Psoas muscle (tissue), 8 donors: ENCODE measurements at regions of chr4 and their contacts with region 1.

Region 1: DNA sequence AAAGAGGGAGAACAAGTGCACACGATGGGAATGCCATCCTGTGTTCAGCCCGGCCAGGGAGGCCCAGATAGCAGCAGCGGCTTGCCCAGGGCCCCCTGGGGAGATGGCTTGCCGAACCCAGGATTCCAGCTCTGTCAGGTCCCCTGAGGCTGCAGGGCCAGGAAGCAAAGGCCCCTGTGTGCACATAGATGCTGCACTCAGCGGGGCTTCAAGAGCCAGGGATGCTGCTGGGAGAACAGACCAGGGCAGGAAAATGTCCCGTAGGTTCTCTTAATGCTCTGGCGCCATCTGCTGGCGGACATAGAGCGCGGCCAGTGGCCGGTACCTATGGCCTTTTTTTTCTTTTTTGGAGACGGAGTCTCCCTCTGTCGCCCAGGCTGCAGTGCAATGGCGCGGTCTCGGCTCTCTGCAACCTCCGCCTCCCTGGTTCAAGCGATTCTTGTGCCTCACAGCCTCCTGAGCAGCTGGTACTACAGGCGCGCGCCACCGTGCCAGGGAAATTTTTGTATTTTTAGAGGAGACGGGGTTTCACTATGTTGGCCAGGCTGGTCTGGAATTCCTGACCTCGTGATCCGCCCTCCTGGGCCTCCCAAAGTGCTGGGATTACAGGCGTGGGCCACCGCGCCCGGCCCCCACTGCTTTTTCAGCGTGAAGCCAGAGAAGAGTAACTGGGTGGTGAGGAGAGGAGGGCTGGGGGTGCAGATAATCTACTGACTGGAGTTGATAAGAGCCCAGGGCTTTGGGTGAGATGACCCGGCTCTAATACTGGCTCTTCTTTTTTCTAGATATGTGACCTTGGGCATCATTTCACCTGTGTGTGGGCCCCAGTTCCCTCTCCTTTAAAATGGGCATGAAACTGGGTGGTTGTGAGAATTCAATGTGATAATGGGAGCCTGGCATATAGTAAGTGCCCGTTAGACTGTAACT is 22.5 kb downstream of the MED28 start:
- DNase-seq: peak; percentile 78 to 89
- ATAC-seq: peak; percentile 81 to 88 (median 84)
- H3K4me3 ChIP-seq: no peak overlapping the region
- H3K27ac ChIP-seq: no peak overlapping the region
- H3K4me1 ChIP-seq: no peaks in the 10 kb centered on the region
- H3K27me3 ChIP-seq: no peaks in the 10 kb centered on the region
- CTCF ChIP-seq: peak; percentile 92

Region 2: GRCh38 chr4:17166954-17167353 is 470.0 kb before region 1 on chr4:
- intact Hi-C with region 1: no loop called
- DNase-seq: no peak
- ATAC-seq: no peak
- H3K4me3 ChIP-seq: no peak overlapping the region
- H3K27ac ChIP-seq: no peak overlapping the region
- H3K4me1 ChIP-seq: no peaks in the 10 kb centered on the region
- H3K27me3 ChIP-seq: no peaks in the 10 kb centered on the region
- CTCF ChIP-seq: no peak

Region 3: GRCh38 chr4:17544205-17544604 is 92.8 kb before region 1 on chr4:
- intact Hi-C with region 1: loop called (anchors 2 to 5 kb)
- DNase-seq: no peak
- ATAC-seq: no peak
- H3K4me3 ChIP-seq: no peak overlapping the region
- H3K27ac ChIP-seq: no peak overlapping the region
- H3K4me1 ChIP-seq: no peaks in the 10 kb centered on the region
- H3K27me3 ChIP-seq: no peaks in the 10 kb centered on the region
- CTCF ChIP-seq: no peak

Region 4: DNA sequence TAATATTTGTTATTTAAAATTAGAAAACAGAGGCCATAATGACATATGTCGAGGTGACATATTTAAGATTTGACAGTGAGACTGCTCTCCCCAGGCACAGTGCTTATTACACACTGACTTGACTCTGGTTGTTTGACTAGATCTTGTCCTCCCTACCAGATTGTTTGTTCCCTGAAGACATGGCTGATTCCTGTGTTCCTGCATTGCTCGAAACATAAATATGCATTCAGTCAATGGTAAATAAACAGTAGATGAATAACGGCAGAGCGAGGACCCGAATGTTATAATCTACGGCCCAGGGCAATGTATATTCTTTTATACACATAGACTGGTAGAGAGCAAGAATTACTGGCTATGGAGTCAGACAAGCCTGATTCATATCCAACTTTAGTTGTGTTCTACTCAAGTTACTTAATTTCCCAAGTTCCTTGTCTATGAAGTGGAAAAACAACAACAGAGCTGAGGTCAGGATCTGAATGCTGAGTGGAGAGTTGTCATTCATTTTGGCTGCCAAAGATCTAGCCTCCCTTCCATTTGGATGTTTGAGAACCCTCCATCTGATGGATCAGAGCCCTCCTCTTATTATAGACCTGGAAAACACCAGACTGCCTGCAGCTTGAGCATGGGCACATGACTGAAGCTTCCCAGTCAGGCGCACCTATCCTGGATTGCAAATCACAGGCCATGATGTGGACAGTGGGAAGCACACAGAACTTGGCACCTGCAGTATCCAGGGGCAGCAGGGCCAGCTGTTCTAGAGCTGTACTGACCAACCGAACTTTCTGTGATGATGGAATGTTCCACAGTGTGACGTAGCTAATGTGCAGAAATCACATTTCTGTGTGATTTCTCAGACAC is 64.3 kb after region 1 on chr4:
- intact Hi-C with region 1: no loop called
- DNase-seq: no peak
- ATAC-seq: peak; percentile 52 to 86 (median 67)
- H3K4me3 ChIP-seq: no peak overlapping the region
- H3K27ac ChIP-seq: no peak overlapping the region
- H3K4me1 ChIP-seq: no peaks in the 10 kb centered on the region
- H3K27me3 ChIP-seq: no peaks in the 10 kb centered on the region
- CTCF ChIP-seq: no peak